CD8-positive, alpha-beta T cell (primary cell): ENCODE measurements at regions of chr21 and their contacts with region 1.

Region 1: DNA sequence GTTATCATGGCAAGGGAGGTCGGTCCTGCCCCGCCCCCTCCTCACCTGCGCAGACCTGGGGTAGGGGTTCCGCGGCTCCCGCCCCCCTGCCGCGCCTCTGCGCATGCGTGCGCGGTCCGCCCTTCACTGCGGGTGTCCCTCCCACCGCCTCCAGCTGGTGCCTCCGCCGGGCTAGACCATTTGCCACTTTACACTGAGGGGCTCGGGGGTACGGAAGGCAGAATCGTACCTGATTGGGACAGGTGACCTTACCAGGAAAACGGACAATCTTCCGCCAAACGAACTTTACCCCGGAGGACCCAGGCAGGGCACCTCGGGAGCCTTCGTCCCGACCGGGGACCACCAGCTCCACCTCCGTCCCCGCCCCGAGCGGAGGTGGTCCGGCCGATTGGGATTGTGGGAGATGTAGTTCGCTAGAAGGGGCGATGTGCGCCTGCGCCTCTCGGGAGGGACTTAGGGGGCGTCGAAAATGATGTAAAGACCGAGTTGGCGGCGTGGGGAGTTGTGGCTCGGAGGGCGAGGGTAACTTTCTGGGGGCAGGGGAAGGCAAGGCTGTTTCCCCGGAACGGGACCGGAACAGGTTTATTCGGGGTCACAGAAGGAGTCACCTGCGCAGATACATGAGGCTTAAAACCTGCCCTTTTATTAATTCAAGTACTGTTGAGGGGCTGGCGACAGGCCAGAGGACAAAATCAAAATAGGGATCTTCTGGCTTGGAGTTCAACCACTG is at the start of gene DNAJC28:
- DNase-seq: peak; percentile 87 to 98 (median 95)
- ATAC-seq: peak; percentile 97
- H3K4me3 ChIP-seq: peak within 1 kb of the TSS; percentile 81 to 95
- H3K4me3 Mint-ChIP-seq: peak within 1 kb of the TSS; percentile 92
- H3K27ac ChIP-seq: peak within 1 kb of the TSS; percentile 60 to 73
- H3K27ac Mint-ChIP-seq: peak within 1 kb of the TSS; percentile 94
- H3K4me1 ChIP-seq: peaks cover 9% of the 10 kb centered on the region
- H3K4me1 Mint-ChIP-seq: peaks cover 11% of the 10 kb centered on the region
- H3K27me3 ChIP-seq: no peaks in the 10 kb centered on the region
- H3K27me3 Mint-ChIP-seq: no peaks in the 10 kb centered on the region
- CTCF ChIP-seq: no peak
- total RNA-seq, gene DNAJC28: 0.22 to 0.33 TPM

Region 2: GRCh38 chr21:32278518-32279376 is 1212.8 kb before region 1 on chr21 and contains the start of gene MIS18A:
- CTCF ChIA-PET with region 1: no interaction called
- POLR2A ChIA-PET with region 1: no interaction called
- intact Hi-C with region 1: loop called in 1 of 2 experiments (anchors 5 kb)
- DNase-seq: peak; percentile 95 to 99 (median 97)
- ATAC-seq: peak; percentile 95
- H3K4me3 ChIP-seq: peak within 1 kb of the TSS; percentile 67 to 74
- H3K4me3 Mint-ChIP-seq: peak within 1 kb of the TSS; percentile 99
- H3K27ac ChIP-seq: peak within 1 kb of the TSS; percentile 33 to 69
- H3K27ac Mint-ChIP-seq: peak within 1 kb of the TSS; percentile 92
- H3K4me1 ChIP-seq: peaks cover 16% of the 10 kb centered on the region
- H3K4me1 Mint-ChIP-seq: peaks cover 31% of the 10 kb centered on the region
- H3K27me3 ChIP-seq: no peaks in the 10 kb centered on the region
- H3K27me3 Mint-ChIP-seq: no peaks in the 10 kb centered on the region
- CTCF ChIP-seq: no peak
- total RNA-seq, gene MIS18A: 3.7 to 5.1 TPM

Region 3: GRCh38 chr21:32727687-32728455 is 763.7 kb before region 1 on chr21 and contains the start of gene SYNJ1:
- CTCF ChIA-PET with region 1: no interaction called
- POLR2A ChIA-PET with region 1: no interaction called
- intact Hi-C with region 1: loop called (anchors 1 to 2 kb)
- DNase-seq: peak; percentile 86 to 96 (median 93)
- ATAC-seq: peak; percentile 86
- H3K4me3 ChIP-seq: peak within 1 kb of the TSS; percentile 86 to 99
- H3K4me3 Mint-ChIP-seq: peak within 1 kb of the TSS; percentile 94
- H3K27ac ChIP-seq: peak within 1 kb of the TSS; percentile 76 to 82
- H3K27ac Mint-ChIP-seq: peak within 1 kb of the TSS; percentile 93
- H3K4me1 ChIP-seq: peaks cover 45% of the 10 kb centered on the region
- H3K4me1 Mint-ChIP-seq: peaks cover 61% of the 10 kb centered on the region
- H3K27me3 ChIP-seq: no peaks in the 10 kb centered on the region
- H3K27me3 Mint-ChIP-seq: no peaks in the 10 kb centered on the region
- CTCF ChIP-seq: no peak
- total RNA-seq, gene SYNJ1: 10.5 to 10.7 TPM

Region 4: GRCh38 chr21:33479679-33480480 is 11.7 kb before region 1 on chr21 and contains the start of gene TMEM50B:
- CTCF ChIA-PET with region 1: interaction called, 15 read pairs
- POLR2A ChIA-PET with region 1: interaction called, 96 read pairs
- intact Hi-C with region 1: loop called (anchors 1 kb)
- DNase-seq: peak; percentile 94 to 98 (median 95)
- ATAC-seq: peak; percentile 87
- H3K4me3 ChIP-seq: peak within 1 kb of the TSS; percentile 79 to 88
- H3K4me3 Mint-ChIP-seq: peak within 1 kb of the TSS; percentile 89
- H3K27ac ChIP-seq: peak within 1 kb of the TSS; percentile 83 to 87
- H3K27ac Mint-ChIP-seq: peak within 1 kb of the TSS; percentile 96
- H3K4me1 ChIP-seq: peaks cover 13% of the 10 kb centered on the region
- H3K4me1 Mint-ChIP-seq: peaks cover 28% of the 10 kb centered on the region
- H3K27me3 ChIP-seq: no peaks in the 10 kb centered on the region
- H3K27me3 Mint-ChIP-seq: no peaks in the 10 kb centered on the region
- CTCF ChIP-seq: peak; percentile 31
- total RNA-seq, gene TMEM50B: 32.6 to 34.0 TPM

Region 5: GRCh38 chr21:33542640-33543504 is 51.3 kb after region 1 on chr21 and contains the start of gene SON:
- CTCF ChIA-PET with region 1: no interaction called
- POLR2A ChIA-PET with region 1: interaction called, 8 read pairs
- intact Hi-C with region 1: loop called (anchors 1 kb)
- DNase-seq: peak; percentile 93 to 99 (median 96)
- ATAC-seq: peak; percentile 89
- H3K4me3 ChIP-seq: peak within 1 kb of the TSS; percentile 87 to 88
- H3K4me3 Mint-ChIP-seq: peak within 1 kb of the TSS; percentile 96
- H3K27ac ChIP-seq: peak within 1 kb of the TSS; percentile 99
- H3K27ac Mint-ChIP-seq: peak within 1 kb of the TSS; percentile 99
- H3K4me1 ChIP-seq: peaks cover 44% of the 10 kb centered on the region
- H3K4me1 Mint-ChIP-seq: peaks cover 55% of the 10 kb centered on the region
- H3K27me3 ChIP-seq: no peaks in the 10 kb centered on the region
- H3K27me3 Mint-ChIP-seq: no peaks in the 10 kb centered on the region
- CTCF ChIP-seq: no peak
- total RNA-seq, gene SON: 418 to 422 TPM

Region 6: DNA sequence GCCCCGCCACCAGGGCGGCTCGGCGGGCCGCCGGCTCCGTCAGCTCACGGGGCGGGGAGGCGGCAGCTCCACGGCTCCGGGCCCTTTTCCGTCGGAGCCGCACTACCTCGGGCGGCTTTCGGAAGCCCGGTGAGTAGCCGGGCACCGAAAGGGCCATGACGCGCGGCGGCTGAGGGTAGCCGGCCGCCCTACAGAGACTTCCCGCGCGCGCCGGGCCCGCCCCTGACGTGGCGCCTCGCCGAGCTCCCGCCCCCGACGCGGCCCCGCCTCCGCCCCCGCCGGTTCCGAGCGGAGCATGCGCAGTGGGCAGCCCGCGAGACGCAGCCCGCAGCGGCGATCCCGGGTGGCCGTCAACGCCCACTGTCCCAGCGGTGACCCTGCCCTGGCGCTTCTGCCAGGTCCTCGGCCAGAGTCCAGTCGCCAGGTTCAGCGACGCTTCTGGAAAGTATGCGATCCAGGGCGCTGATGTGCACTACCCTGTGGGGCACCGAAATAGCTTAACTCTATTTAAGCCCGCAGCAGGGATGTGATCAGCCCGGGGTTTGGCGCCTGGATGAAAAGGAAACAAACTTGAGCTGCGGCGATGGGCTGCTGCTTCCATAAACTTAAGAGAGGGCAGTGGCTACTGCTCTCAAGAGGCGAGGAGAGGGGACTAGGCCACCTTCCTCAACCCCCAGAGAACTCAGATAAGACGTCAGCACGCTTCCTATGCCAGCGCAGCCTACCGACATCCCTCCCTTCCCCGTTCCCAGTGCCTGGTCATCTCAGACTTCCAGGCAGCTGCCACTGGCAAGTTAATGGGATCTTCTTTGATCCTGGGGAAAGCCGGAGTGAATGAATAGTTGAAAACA is 97.2 kb after region 1 on chr21 and contains the start of gene DONSON:
- CTCF ChIA-PET with region 1: no interaction called
- POLR2A ChIA-PET with region 1: interaction called, 3 read pairs
- intact Hi-C with region 1: loop called in 1 of 2 experiments (anchors 1 kb)
- DNase-seq: peak; percentile 72 to 94 (median 87)
- ATAC-seq: peak; percentile 94
- H3K4me3 ChIP-seq: peak within 1 kb of the TSS; percentile 82 to 91
- H3K4me3 Mint-ChIP-seq: peak within 1 kb of the TSS; percentile 95
- H3K27ac ChIP-seq: peak within 1 kb of the TSS; percentile 53 to 61
- H3K27ac Mint-ChIP-seq: peak within 1 kb of the TSS; percentile 87
- H3K4me1 ChIP-seq: peaks cover 14% of the 10 kb centered on the region
- H3K4me1 Mint-ChIP-seq: peaks cover 16% of the 10 kb centered on the region
- H3K27me3 ChIP-seq: no peaks in the 10 kb centered on the region
- H3K27me3 Mint-ChIP-seq: no peaks in the 10 kb centered on the region
- CTCF ChIP-seq: no peak
- total RNA-seq, gene DONSON: 11.0 to 11.9 TPM

Region 7: DNA sequence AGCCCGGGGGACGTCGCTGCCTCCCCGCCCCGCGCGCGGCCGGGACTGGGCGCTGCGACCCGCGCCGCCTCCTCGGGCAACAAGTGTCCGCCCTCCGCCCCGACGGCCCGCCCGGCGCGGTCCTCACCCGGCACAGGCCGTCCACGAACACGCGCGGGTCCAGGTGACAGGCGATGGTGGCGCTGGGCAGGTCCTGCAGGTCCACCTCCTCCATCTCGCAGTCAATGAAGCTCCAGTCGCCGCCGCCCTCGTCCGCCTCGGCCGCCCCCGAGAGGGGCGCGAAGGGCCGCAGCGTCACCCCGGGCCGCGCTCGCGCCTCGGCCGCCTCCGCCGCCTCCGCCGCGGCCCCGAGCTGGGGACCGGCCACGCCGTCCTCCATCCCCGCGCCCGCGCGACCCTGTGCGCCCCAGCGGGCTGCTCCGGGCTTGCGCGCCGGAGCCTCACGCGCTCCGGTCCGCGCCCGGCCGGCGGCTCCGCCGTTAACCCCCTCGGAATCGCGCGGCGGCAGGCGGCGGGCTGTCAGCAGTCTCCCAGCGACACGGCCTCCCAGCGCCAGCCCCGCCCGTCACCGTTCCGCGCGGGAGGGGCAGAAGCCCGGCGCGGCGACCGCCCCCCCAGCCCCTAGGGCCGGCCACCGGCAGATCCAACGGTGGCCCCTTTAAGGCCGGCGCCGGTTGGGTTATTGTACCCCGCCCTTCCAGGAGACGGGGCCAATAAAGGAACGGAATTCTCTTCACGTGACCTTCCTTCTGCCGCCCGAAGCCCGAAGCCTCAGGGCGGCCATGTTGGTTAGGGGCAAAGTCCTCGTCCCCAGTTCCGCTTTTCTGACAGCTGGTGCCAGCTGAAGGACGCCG is 1123.3 kb after region 1 on chr21 and contains the start of gene RCAN1:
- CTCF ChIA-PET with region 1: no interaction called
- POLR2A ChIA-PET with region 1: no interaction called
- intact Hi-C with region 1: loop called in 1 of 2 experiments (anchors 5 kb)
- DNase-seq: peak; percentile 64 to 94 (median 85)
- ATAC-seq: peak; percentile 95
- H3K4me3 ChIP-seq: peak within 1 kb of the TSS; percentile 51 to 63
- H3K4me3 Mint-ChIP-seq: peak within 1 kb of the TSS; percentile 90
- H3K27ac ChIP-seq: peak within 1 kb of the TSS; percentile 41 to 68
- H3K27ac Mint-ChIP-seq: peak within 1 kb of the TSS; percentile 91
- H3K4me1 ChIP-seq: peaks cover 13% of the 10 kb centered on the region
- H3K4me1 Mint-ChIP-seq: peaks cover 21% of the 10 kb centered on the region
- H3K27me3 ChIP-seq: no peaks in the 10 kb centered on the region
- H3K27me3 Mint-ChIP-seq: no peaks in the 10 kb centered on the region
- CTCF ChIP-seq: no peak
- total RNA-seq, gene RCAN1: 0.73 to 1.0 TPM